Psoas muscle (tissue), 8 donors: ENCODE measurements at regions of chr1 and their contacts with region 1.

Region 1: GRCh38 chr1:12610305-12610935 is 7.6 kb downstream of the DHRS3 start:
- DNase-seq: no peak
- ATAC-seq: no peak
- H3K4me3 ChIP-seq: no peak overlapping the region
- H3K27ac ChIP-seq: peak overlapping the region; percentile 41
- H3K4me1 ChIP-seq: peaks cover 21% of the 10 kb centered on the region
- H3K27me3 ChIP-seq: no peaks in the 10 kb centered on the region
- CTCF ChIP-seq: no peak

Region 2: DNA sequence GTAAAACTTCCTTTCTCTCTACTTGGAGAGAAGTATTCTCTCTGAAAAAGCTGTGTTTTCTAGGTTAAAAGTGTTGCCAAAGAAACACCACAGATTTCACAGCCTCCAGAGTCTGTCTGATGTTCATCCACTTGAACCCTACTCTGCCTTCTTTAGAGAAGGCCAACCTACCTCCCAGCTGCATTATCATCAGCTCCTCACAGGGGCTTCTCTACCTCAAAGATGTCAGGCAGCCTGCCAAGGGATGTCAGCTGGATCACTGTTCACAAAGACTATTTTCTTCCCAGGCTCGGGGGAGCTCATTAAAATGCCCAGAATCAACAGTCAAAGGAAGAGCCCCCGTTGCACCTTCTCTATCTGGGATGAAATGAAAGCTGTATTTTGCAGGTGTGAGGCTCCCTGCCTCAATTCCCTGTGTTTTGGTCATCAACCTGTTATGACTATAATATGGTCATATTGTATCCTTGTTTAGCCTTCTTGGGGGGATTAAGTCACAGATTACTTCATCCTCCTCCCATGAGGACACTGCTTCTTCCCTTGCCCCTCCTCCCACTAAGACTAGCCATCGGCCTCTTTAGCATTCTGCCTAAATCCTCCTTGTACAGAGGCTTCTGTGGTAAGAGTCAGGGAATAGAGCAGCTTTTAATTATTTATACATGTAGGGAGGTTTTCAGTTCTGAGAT is 1395.6 kb before region 1 on chr1:
- intact Hi-C with region 1: loop called in 1 of 2 experiments (anchors 5 kb)
- DNase-seq: no peak
- ATAC-seq: no peak
- H3K4me3 ChIP-seq: no peak overlapping the region
- H3K27ac ChIP-seq: no peak overlapping the region
- H3K4me1 ChIP-seq: no peaks in the 10 kb centered on the region
- H3K27me3 ChIP-seq: no peaks in the 10 kb centered on the region
- CTCF ChIP-seq: no peak

Region 3: GRCh38 chr1:12397462-12398450 is 212.7 kb before region 1 on chr1:
- intact Hi-C with region 1: no loop called
- DNase-seq: no peak
- ATAC-seq: no peak
- H3K4me3 ChIP-seq: no peak overlapping the region
- H3K27ac ChIP-seq: no peak overlapping the region
- H3K4me1 ChIP-seq: peaks cover 4% of the 10 kb centered on the region
- H3K27me3 ChIP-seq: no peaks in the 10 kb centered on the region
- CTCF ChIP-seq: no peak

Region 4: GRCh38 chr1:12424087-12424529 is 186.3 kb before region 1 on chr1:
- intact Hi-C with region 1: no loop called
- DNase-seq: no peak
- ATAC-seq: peak in 2 of 4 donors; percentile 21 to 44
- H3K4me3 ChIP-seq: no peak overlapping the region
- H3K27ac ChIP-seq: peak overlapping the region; percentile 25
- H3K4me1 ChIP-seq: peaks cover 24% of the 10 kb centered on the region
- H3K27me3 ChIP-seq: no peaks in the 10 kb centered on the region
- CTCF ChIP-seq: no peak